Activated T-helper 1 cell treated with anti-CD3 and anti-CD28 coated beads, Interleukin-12 subunit alpha, Interleukin-12 subunit beta, Interleukin-2, Interleukin-4 antibody, amounts not matched to agents 30 ng/mL and 10 ng/mL and 1 ng/mL, durations not matched to agents 14 hours and 24 hours and 36 hours (primary cell): ENCODE measurements at regions of chr4 and their contacts with region 1.

Region 1: DNA sequence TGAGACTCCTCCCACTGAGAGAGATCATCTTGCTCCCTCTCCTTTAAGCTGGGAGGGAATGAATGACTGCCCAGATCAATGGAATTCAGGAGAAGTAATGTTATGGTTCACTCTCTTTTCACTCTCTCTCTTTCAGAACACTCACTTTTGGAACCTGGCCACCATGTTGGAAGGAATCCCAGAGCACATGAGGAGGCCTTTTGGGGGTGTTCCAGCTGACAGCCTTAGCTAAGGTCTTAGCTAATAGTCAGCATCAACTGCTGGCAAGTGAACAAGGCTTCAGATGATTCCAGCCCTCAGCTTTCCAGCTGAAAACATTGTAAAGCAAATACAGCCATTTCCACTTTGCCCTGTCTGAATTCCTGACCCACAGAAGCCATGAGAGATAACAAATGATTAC is 124.0 kb upstream of the CLNK start:
- DNase-seq: no peak
- H3K4me3 Mint-ChIP-seq: no peak overlapping the region
- H3K27ac Mint-ChIP-seq: no peak overlapping the region
- H3K4me1 Mint-ChIP-seq: peaks cover 7% of the 10 kb centered on the region
- H3K27me3 Mint-ChIP-seq: peaks cover 2% of the 10 kb centered on the region

Region 2: DNA sequence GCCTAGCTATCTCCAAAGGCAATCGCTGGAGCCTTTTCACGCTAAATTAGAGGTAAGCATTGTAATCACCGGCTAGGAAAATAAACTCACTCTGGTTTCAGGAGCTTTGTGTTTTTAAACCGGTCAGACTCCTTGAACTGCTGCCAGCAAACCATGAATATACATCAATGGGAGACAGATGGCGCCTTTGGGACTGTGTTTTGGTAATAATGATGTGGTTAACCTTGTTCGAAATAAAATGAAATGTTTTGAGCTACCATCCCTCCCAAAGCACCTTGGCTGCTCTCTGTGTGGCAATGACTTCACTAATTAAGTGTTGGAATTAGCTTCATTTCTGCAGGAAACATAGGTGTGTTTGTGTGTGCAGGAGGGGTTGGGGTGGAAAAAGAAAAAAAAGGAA is 189.4 kb before region 1 on chr4:
- intact Hi-C with region 1: no loop called
- DNase-seq: no peak
- H3K4me3 Mint-ChIP-seq: no peak overlapping the region
- H3K27ac Mint-ChIP-seq: no peak overlapping the region
- H3K4me1 Mint-ChIP-seq: peaks cover 7% of the 10 kb centered on the region
- H3K27me3 Mint-ChIP-seq: peaks cover 6% of the 10 kb centered on the region

Region 3: GRCh38 chr4:10684631-10685030 is 124.0 kb before region 1 on chr4 and contains the start of gene CLNK:
- intact Hi-C with region 1: no loop called
- DNase-seq: no peak
- H3K4me3 Mint-ChIP-seq: no peak within 1 kb of the TSS
- H3K27ac Mint-ChIP-seq: no peak within 1 kb of the TSS
- H3K4me1 Mint-ChIP-seq: peaks cover 5% of the 10 kb centered on the region
- H3K27me3 Mint-ChIP-seq: no peaks in the 10 kb centered on the region
- total RNA-seq, gene CLNK: 0.57 and 1.1 TPM in 2 replicates

Region 4: GRCh38 chr4:10783351-10783750 is 25.2 kb before region 1 on chr4:
- intact Hi-C with region 1: no loop called
- DNase-seq: no peak
- H3K4me3 Mint-ChIP-seq: no peak overlapping the region
- H3K27ac Mint-ChIP-seq: peak overlapping the region; percentile 71
- H3K4me1 Mint-ChIP-seq: peaks cover 21% of the 10 kb centered on the region
- H3K27me3 Mint-ChIP-seq: peaks cover 4% of the 10 kb centered on the region

Region 5: GRCh38 chr4:10853196-10853595 is 44.6 kb after region 1 on chr4:
- intact Hi-C with region 1: loop called (anchors 5 kb)
- DNase-seq: no peak
- H3K4me3 Mint-ChIP-seq: no peak overlapping the region
- H3K27ac Mint-ChIP-seq: peak overlapping the region; percentile 61
- H3K4me1 Mint-ChIP-seq: peaks cover 12% of the 10 kb centered on the region
- H3K27me3 Mint-ChIP-seq: peaks cover 3% of the 10 kb centered on the region